ENCODE measurements at regions of chr5 and their contacts with region 1.

Region 1: GRCh38 chr5:174327317-174328236 is 282.1 kb downstream of the NSG2 start:
- DNase-seq: no peak
- H3K4me3 ChIP-seq: no peak overlapping the region
- H3K27ac ChIP-seq: no peak overlapping the region
- H3K4me1 ChIP-seq: no peaks in the 10 kb centered on the region
- H3K27me3 ChIP-seq: peaks cover 0 to 42% (median 2%) of the 10 kb centered on the region in 4 donors
- CTCF ChIP-seq: peak; percentile 55 to 66 (median 56)
- EP300 ChIP-seq: no peak
- POLR2A ChIP-seq: no peak

Region 2: DNA sequence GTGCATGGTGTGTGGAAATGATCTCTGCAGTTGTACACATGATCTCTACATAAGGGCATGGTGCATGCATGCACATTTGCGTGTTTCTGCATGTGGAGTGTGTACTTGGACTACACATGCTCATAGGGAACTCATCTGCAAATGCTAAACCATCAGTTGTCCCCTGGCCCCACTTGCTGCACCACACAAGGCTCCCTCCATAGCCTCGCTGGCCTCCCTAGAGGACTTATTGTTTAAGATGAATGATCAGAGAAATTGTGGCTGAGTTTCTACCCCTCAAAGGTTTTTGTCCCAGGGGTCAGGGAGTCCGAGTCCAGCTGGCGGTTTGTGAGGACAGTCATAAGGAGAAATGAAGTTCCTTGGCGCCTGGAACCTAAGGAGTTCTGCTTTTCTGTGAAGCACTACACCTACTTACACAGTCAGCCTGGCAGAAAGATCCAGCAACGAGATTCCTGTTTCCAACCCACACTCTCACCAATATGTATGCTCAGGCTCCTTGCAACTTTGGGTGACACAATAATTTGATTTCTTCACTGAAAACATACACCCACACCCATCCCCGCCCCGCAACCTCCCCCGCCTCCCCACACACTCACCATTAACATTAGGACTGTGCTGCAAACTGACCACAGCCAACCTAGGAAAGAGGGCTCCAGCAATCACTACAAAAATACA is 519.3 kb before region 1 on chr5:
- intact Hi-C with region 1: no loop called
- DNase-seq: no peak
- H3K4me3 ChIP-seq: no peak overlapping the region
- H3K27ac ChIP-seq: no peak overlapping the region
- H3K4me1 ChIP-seq: no peaks in the 10 kb centered on the region
- H3K27me3 ChIP-seq: no peaks in the 10 kb centered on the region
- CTCF ChIP-seq: no peak
- EP300 ChIP-seq: no peak
- POLR2A ChIP-seq: no peak

Region 3: GRCh38 chr5:173997331-173997730 is 330.2 kb before region 1 on chr5:
- intact Hi-C with region 1: no loop called
- DNase-seq: no peak
- H3K4me3 ChIP-seq: no peak overlapping the region
- H3K27ac ChIP-seq: no peak overlapping the region
- H3K4me1 ChIP-seq: no peaks in the 10 kb centered on the region
- H3K27me3 ChIP-seq: peaks cover 0 to 11% (median 0%) of the 10 kb centered on the region in 4 donors
- CTCF ChIP-seq: no peak
- EP300 ChIP-seq: no peak
- POLR2A ChIP-seq: no peak

Region 4: GRCh38 chr5:174371595-174372128 is 44.1 kb after region 1 on chr5:
- intact Hi-C with region 1: no loop called
- DNase-seq: no peak
- H3K4me3 ChIP-seq: no peak overlapping the region
- H3K27ac ChIP-seq: no peak overlapping the region
- H3K4me1 ChIP-seq: no peaks in the 10 kb centered on the region
- H3K27me3 ChIP-seq: no peaks in the 10 kb centered on the region
- CTCF ChIP-seq: no peak
- EP300 ChIP-seq: no peak
- POLR2A ChIP-seq: no peak

Region 5: DNA sequence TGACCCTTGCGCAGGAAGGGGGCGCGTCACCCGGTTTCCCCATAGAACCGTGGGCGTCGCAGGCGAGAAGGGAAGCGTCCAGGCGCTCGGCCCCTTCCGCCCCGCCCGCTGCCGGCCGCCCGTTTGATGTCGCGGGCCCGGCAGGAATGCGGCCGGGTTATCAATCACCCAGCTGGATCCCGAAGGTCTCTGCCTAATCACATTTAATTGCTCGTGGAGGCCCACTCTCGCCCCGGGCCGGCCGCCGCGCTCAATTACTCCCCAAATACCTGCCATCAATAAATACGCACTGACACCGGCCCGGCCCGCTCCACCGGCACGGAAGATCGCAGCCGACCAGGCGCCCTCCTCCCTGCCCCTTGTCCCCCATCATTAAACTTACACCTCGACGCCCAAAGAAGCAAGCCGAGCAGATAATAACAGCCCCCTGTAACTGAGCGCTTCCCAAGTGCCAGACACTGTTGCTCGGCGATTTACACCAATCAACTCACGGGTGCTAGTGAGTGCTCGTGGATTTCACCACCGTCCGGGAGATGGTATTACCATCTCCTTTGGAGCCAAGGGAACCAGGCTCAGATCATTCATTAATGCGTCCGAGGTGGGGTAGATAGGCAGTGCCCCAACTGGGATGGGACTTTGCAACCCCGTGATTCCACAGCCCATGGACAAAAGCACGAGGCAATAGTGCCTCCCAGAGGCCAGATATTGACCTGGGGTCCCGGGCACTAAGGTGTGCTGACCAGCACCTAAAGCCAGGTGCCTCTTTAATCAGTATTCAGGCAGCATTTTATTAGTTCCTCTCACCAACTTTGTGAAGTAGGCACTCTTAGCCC is 408.1 kb after region 1 on chr5:
- intact Hi-C with region 1: loop called (anchors 5 kb)
- DNase-seq: no peak
- H3K4me3 ChIP-seq: peak overlapping the region in 2 of 4 donors; percentile 20 to 22
- H3K27ac ChIP-seq: no peak overlapping the region
- H3K4me1 ChIP-seq: peaks cover 6 to 22% (median 18%) of the 10 kb centered on the region in 4 donors
- H3K27me3 ChIP-seq: peaks cover 0 to 88% (median 54%) of the 10 kb centered on the region in 4 donors
- CTCF ChIP-seq: peak; percentile 34 to 37 (median 36)
- EP300 ChIP-seq: no peak
- POLR2A ChIP-seq: no peak